ENCODE measurements at regions of chr11 and their contacts with region 1.

Region 1: GRCh38 chr11:85854557-85855340 is 434 bp upstream of the CCDC83 start:
- DNase-seq: peak; percentile 95
- H3K4me3 ChIP-seq: peak overlapping the region; percentile 41
- H3K27ac ChIP-seq: peak overlapping the region; percentile 70
- H3K4me1 ChIP-seq: peaks cover 13% of the 10 kb centered on the region
- H3K27me3 ChIP-seq: no peaks in the 10 kb centered on the region
- CTCF ChIP-seq: peak; percentile 94

Region 2: DNA sequence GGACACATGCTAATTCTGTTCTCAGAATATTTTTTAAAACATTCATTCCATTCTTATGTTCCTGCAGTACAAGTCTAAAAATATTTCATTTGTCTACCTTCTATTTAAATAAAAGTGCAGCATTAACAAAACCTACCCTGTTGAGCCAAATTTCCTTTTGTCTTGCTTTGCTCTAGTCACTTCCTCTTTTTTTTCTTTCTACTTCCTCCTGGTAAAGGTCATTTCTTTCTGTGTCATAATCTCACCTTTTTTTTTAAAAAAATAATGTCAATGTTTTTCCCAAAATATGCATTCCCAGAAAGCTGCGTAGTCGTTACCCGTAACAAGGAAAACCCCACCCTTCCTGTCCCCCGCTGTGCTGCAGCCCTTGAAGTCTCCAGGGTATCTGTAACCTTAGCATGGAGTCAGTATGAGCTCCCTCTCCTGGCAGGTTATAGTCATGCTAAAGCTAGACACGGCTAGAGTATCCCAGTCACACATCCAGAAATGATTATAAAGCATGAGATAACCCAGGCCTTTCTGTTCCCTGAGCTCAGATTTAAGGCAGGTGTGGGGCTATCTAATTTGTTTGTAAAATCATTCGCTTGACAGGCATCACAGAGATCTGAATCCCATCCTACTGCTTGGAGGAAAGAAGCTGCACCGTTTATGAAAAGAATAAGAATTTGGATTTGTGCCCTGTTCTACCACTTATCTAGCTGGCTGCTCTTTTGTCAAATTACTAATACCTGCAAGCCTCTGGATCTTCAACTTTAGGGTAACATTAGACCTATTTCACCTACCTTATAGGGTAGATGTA is 338.7 kb after region 1 on chr11:
- CTCF ChIA-PET with region 1: interaction called, 6 read pairs
- POLR2A ChIA-PET with region 1: no interaction called
- intact Hi-C with region 1: loop called (anchors 5 kb)
- DNase-seq: peak; percentile 94
- H3K4me3 ChIP-seq: peak overlapping the region; percentile 25
- H3K27ac ChIP-seq: no peak overlapping the region
- H3K4me1 ChIP-seq: peaks cover 7% of the 10 kb centered on the region
- H3K27me3 ChIP-seq: no peaks in the 10 kb centered on the region
- CTCF ChIP-seq: peak; percentile 88

Region 3: DNA sequence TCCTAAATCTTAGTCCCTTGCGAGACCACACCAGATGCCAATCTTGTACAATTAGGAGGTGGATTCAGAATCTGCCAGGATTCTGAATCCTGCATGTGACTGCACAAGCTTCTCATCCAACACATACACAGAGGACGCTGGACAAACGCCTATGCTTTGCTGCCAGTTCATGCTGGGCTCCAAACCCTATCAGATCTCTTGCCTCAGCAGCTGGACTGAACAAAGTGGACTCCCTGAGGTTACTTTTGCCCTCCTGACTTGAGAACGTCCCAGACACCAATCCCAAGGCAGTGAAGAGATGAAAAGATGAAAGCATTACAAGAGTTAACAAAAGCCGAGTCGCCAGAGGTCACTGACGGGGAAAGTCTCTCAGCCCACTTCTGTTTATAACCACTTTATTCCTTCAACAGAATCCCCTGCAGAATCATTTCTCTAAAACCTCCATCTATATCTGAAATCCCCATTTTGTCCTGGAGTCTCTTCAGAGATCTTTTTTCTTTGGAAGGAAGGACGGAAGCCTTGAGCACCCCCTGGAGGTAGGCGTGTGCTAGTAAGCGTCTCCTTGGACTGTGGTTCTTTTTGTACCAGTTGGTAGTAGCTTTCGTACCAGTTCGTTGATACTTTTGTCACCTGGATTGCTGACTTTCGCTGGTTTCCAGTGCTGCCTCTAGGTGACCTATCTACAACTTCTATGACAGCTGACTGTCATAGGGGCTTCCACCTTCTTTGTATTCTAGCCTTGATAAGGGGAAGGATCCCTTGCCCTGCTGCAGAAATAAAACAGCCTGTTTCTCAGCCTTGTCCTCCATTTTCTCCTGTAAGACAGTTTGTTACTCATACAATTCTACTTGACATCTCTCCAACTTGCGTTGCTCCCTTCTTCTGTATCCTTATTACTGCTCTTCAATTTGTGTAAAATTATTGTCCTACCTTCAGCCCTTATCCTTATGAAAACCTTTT is 363.7 kb after region 1 on chr11:
- CTCF ChIA-PET with region 1: no interaction called
- POLR2A ChIA-PET with region 1: no interaction called
- intact Hi-C with region 1: loop called (anchors 2 kb)
- DNase-seq: peak; percentile 89
- H3K4me3 ChIP-seq: no peak overlapping the region
- H3K27ac ChIP-seq: no peak overlapping the region
- H3K4me1 ChIP-seq: peaks cover 10% of the 10 kb centered on the region
- H3K27me3 ChIP-seq: no peaks in the 10 kb centered on the region
- CTCF ChIP-seq: peak; percentile 97

Region 4: DNA sequence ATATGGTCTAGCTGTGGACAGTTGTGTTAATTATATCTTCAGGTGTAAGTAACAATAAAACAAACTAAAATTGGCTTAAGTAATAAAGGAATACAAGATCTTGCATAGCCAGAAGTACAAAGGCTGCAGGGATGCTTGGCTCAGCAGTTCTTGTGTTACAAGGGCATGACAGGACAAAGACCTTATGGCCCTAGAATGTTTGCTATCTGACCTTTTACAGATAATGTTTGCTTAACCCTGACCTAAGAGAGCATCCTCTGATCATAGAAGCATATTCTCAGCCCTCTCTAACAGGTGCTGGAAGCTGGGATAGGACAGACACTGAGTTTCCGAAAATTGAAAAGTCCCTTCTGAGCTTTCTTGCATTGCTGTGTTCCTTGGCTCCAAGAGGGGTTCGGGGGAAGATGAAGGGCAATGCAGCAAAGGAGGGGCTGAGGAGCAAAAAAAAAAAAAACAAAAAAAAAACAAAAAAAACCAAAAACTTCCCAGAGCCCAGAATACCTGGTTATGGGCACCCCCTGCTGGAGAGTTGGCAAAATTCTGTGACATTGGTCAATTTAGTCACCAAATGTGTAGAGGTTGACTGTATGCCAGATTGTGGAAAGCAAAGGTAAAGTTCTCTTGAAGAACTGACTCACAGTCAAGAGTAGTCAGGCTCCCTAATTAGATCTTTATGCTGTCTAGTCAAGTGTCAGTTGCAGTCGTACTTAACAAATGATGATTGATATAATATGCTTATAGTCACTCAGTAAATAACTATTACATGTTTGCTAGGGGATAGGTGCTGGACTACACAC is 436.9 kb after region 1 on chr11:
- CTCF ChIA-PET with region 1: interaction called, 4 read pairs
- POLR2A ChIA-PET with region 1: no interaction called
- intact Hi-C with region 1: loop called (anchors 2 kb)
- DNase-seq: peak; percentile 80
- H3K4me3 ChIP-seq: no peak overlapping the region
- H3K27ac ChIP-seq: no peak overlapping the region
- H3K4me1 ChIP-seq: no peaks in the 10 kb centered on the region
- H3K27me3 ChIP-seq: no peaks in the 10 kb centered on the region
- CTCF ChIP-seq: peak; percentile 86

Region 5: GRCh38 chr11:86559311-86559945 is 704.7 kb after region 1 on chr11:
- CTCF ChIA-PET with region 1: interaction called, 12 read pairs
- POLR2A ChIA-PET with region 1: no interaction called
- intact Hi-C with region 1: no loop called
- DNase-seq: peak; percentile 31
- H3K4me3 ChIP-seq: no peak overlapping the region
- H3K27ac ChIP-seq: no peak overlapping the region
- H3K4me1 ChIP-seq: no peaks in the 10 kb centered on the region
- H3K27me3 ChIP-seq: no peaks in the 10 kb centered on the region
- CTCF ChIP-seq: no peak

Region 6: GRCh38 chr11:86608251-86608799 is 753.6 kb after region 1 on chr11:
- CTCF ChIA-PET with region 1: no interaction called
- POLR2A ChIA-PET with region 1: no interaction called
- intact Hi-C with region 1: loop called (anchors 10 kb)
- DNase-seq: peak; percentile 82
- H3K4me3 ChIP-seq: no peak overlapping the region
- H3K27ac ChIP-seq: no peak overlapping the region
- H3K4me1 ChIP-seq: peaks cover 5% of the 10 kb centered on the region
- H3K27me3 ChIP-seq: no peaks in the 10 kb centered on the region
- CTCF ChIP-seq: peak; percentile 100